Esophagus muscularis mucosa (tissue), 4 donors: ENCODE measurements at regions of chr9 and their contacts with region 1.

Region 1: GRCh38 chr9:72871685-72872084 is 81.2 kb downstream of the ALDH1A1 start:
- DNase-seq: no peak
- H3K4me3 ChIP-seq: peak overlapping the region in 3 of 4 donors; percentile 11 to 36 (median 18)
- H3K27ac ChIP-seq: peak overlapping the region in 3 of 4 donors; percentile 11 to 29 (median 19)
- H3K4me1 ChIP-seq: peaks cover 15 to 31% (median 28%) of the 10 kb centered on the region in 4 donors
- H3K27me3 ChIP-seq: no peaks in the 10 kb centered on the region
- CTCF ChIP-seq: peak; percentile 41 to 47 (median 45)
- EP300 ChIP-seq: no peak
- POLR2A ChIP-seq: no peak

Region 2: DNA sequence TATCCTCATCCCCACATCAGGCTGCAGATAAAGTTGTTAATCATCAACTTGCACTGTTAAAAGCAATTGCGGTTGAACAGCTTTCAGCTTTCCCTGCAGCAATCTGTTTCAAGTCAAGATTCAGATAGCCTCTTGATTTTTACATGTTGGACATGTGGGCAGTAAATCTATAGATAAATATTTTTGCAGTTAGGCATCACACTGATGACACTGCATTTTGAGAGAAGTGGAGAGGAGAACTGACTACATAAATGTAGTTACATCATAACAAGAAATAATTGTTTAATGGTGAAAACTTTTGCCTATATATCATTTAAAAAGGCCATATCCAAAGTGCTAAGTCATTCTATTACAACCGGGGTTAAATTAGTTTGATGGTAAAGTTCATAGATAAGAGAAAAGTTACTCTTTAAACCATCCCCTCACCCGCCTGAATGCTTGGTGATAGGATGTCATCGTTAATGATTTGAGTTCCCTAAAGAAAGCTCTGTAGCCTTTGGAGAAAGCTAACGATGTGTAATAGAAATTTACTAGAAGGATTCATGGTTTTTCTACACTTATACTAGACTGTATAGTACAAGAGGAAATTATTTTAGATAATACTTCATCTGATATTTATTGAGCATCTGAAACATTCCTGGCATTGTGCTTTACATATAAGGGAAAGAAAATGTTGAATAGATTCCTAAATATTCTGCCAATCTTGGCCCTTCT is 112.0 kb after region 1 on chr9:
- intact Hi-C with region 1: no loop called
- DNase-seq: no peak
- H3K4me3 ChIP-seq: no peak overlapping the region
- H3K27ac ChIP-seq: no peak overlapping the region
- H3K4me1 ChIP-seq: peaks cover 0 to 13% (median 6%) of the 10 kb centered on the region in 4 donors
- H3K27me3 ChIP-seq: no peaks in the 10 kb centered on the region
- CTCF ChIP-seq: no peak
- EP300 ChIP-seq: no peak
- POLR2A ChIP-seq: no peak

Region 3: GRCh38 chr9:73023025-73023541 is 151.4 kb after region 1 on chr9:
- intact Hi-C with region 1: loop called (anchors 5 kb)
- DNase-seq: no peak
- H3K4me3 ChIP-seq: peak overlapping the region in 1 of 4 donors; percentile 14
- H3K27ac ChIP-seq: peak overlapping the region; percentile 54 to 76 (median 75)
- H3K4me1 ChIP-seq: peaks cover 0 to 25% (median 20%) of the 10 kb centered on the region in 4 donors
- H3K27me3 ChIP-seq: no peaks in the 10 kb centered on the region
- CTCF ChIP-seq: peak; percentile 79 to 88 (median 80)
- EP300 ChIP-seq: no peak
- POLR2A ChIP-seq: no peak

Region 4: DNA sequence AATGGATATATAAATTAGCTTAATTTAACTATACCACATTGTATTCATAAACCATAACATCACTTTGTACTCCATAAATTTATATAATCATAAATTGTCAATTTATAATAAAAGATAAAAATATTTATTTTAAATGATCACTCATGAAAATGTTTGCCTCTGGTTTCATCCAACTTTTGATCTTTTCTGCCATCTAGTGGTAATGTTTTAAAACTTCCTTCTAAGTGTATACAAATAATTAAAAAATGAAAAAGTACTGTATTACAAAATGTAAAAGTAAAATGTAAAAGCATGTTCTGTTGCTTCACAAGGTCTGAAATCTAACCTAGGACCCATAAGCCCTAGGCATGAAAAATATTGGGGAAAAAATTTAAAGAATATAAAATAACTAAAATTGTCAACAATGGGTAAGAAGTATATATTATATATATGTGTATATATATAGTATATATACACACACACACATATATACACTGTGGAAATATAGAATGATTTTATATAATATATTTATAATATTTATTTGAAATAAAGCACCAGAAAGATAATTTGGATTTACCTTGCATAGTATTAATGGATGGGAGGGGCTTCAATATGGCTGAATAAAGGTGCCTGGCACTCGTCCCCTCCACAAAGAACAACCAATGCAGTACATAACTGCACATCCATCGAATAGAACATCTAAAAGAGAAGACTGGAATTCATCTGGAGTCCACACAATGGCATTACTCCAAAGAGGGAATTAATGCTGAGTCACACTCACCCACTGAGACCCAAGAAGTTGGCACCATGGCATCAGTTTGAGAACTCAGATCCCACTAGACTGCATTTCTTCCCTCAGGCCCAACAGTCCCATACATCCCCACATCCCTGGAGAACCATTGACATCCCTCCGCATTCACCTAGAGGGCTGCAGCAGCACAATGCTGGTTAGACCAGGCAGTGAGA is 312.5 kb after region 1 on chr9:
- intact Hi-C with region 1: loop called (anchors 5 kb)
- DNase-seq: no peak
- H3K4me3 ChIP-seq: no peak overlapping the region
- H3K27ac ChIP-seq: no peak overlapping the region
- H3K4me1 ChIP-seq: peaks cover 0 to 17% (median 10%) of the 10 kb centered on the region in 4 donors
- H3K27me3 ChIP-seq: no peaks in the 10 kb centered on the region
- CTCF ChIP-seq: peak; percentile 52 to 67 (median 56)
- EP300 ChIP-seq: no peak
- POLR2A ChIP-seq: no peak